ENCODE measurements at regions of chr1 and their contacts with region 1.

Region 1: DNA sequence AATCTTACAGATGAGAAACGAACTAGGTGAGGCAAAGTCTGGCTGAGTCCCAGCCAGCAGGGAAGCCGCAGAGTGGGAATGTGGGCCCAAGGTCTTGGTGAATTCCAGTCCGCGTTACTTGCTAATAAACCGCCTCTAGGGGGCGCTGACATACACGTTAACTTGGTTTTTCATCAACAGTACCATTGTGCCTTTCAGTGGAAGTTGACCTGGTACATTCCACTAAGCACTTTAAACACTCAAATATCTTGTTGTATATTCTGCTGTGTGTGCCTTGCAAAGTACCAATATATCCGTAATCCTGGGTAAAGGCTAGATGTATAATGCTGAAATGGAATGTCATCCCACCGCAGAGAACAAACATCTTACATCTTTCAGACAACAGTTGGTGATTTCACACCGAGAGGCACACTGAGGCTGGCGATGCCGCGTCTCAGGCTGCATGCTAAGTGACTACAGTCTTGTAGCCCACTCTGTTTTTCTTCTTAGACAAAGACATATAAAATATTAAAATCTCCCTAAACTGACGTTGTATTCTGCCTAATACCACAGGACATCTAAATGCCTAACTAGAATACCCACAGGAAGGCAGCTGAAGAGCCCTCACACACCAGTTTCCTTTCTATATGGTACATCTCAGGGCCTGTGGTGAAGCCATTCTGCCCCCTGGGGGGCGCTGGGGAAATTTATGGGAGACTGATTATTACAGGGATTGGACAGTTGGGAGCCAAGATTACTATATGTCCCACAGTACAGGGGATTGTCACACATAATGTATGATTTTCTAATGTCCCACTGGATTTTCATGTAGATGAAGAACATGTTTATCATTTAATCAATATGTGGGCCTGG is 49.2 kb upstream of the C1orf198 start:
- DNase-seq: peak; percentile 60 to 90
- ATAC-seq: peak; percentile 61 to 78 (median 76)
- H3K4me3 ChIP-seq: no peak overlapping the region
- H3K4me3 Mint-ChIP-seq: no peak overlapping the region
- H3K27ac ChIP-seq: no peak overlapping the region
- H3K27ac Mint-ChIP-seq: peak overlapping the region; percentile 41 to 69
- H3K4me1 ChIP-seq: no peaks in the 10 kb centered on the region
- H3K4me1 Mint-ChIP-seq: peaks cover 4 to 5% of the 10 kb centered on the region in 2 donors
- H3K27me3 ChIP-seq: no peaks in the 10 kb centered on the region
- H3K27me3 Mint-ChIP-seq: no peaks in the 10 kb centered on the region
- CTCF ChIP-seq: peak; percentile 78

Region 2: GRCh38 chr1:230971771-230972170 is 54.3 kb after region 1 on chr1:
- intact Hi-C with region 1: loop called (anchors 2 kb)
- DNase-seq: no peak
- ATAC-seq: no peak
- H3K4me3 ChIP-seq: no peak overlapping the region
- H3K4me3 Mint-ChIP-seq: peak overlapping the region; percentile 70
- H3K27ac ChIP-seq: peak overlapping the region; percentile 76
- H3K27ac Mint-ChIP-seq: peak overlapping the region; percentile 87 to 97
- H3K4me1 ChIP-seq: peaks cover 42% of the 10 kb centered on the region
- H3K4me1 Mint-ChIP-seq: peaks cover 68 to 70% of the 10 kb centered on the region in 2 donors
- H3K27me3 ChIP-seq: no peaks in the 10 kb centered on the region
- H3K27me3 Mint-ChIP-seq: no peaks in the 10 kb centered on the region
- CTCF ChIP-seq: no peak

Region 3: GRCh38 chr1:230978491-230979388 is 61.2 kb after region 1 on chr1 and contains the starts of genes ARV1 and TTC13:
- intact Hi-C with region 1: loop called (anchors 1 kb)
- DNase-seq: peak; percentile 92 to 96
- ATAC-seq: peak; percentile 94 to 99 (median 94)
- H3K4me3 ChIP-seq: peak within 1 kb of the TSS; percentile 57
- H3K4me3 Mint-ChIP-seq: peak within 1 kb of the TSS; percentile 99
- H3K27ac ChIP-seq: peak within 1 kb of the TSS; percentile 82
- H3K27ac Mint-ChIP-seq: peak within 1 kb of the TSS in 1 of 2 donors; percentile 97
- H3K4me1 ChIP-seq: peaks cover 40% of the 10 kb centered on the region
- H3K4me1 Mint-ChIP-seq: peaks cover 31 to 49% of the 10 kb centered on the region in 2 donors
- H3K27me3 ChIP-seq: no peaks in the 10 kb centered on the region
- H3K27me3 Mint-ChIP-seq: no peaks in the 10 kb centered on the region
- CTCF ChIP-seq: peak; percentile 35
- total RNA-seq, gene ARV1: 7.2 to 7.6 (median 7.3) TPM
- total RNA-seq, gene TTC13: 72.4 to 90.1 (median 80.4) TPM

Region 4: DNA sequence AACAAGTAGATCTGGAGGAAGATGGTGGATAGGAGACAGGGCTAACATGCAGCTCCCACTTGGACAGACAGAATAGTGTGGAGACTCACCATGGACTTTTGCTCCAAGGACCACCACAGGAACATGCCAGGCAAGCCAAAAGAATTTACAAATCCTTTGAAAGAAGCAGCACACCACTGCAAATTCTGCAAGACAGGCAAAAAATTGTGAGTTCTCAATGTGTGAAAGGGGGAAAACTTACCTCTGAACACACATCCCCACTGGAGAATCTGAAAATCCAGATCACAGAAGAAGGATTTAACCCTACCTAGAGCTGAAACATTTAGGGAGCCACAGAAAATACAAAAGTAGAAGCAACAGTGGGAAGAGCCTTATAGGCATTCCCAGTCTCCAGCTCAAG is 84.4 kb after region 1 on chr1:
- intact Hi-C with region 1: no loop called
- DNase-seq: no peak
- ATAC-seq: no peak
- H3K4me3 ChIP-seq: no peak overlapping the region
- H3K4me3 Mint-ChIP-seq: no peak overlapping the region
- H3K27ac ChIP-seq: no peak overlapping the region
- H3K27ac Mint-ChIP-seq: no peak overlapping the region
- H3K4me1 ChIP-seq: no peaks in the 10 kb centered on the region
- H3K4me1 Mint-ChIP-seq: no peaks in the 10 kb centered on the region
- H3K27me3 ChIP-seq: no peaks in the 10 kb centered on the region
- H3K27me3 Mint-ChIP-seq: no peaks in the 10 kb centered on the region
- CTCF ChIP-seq: no peak

Region 5: DNA sequence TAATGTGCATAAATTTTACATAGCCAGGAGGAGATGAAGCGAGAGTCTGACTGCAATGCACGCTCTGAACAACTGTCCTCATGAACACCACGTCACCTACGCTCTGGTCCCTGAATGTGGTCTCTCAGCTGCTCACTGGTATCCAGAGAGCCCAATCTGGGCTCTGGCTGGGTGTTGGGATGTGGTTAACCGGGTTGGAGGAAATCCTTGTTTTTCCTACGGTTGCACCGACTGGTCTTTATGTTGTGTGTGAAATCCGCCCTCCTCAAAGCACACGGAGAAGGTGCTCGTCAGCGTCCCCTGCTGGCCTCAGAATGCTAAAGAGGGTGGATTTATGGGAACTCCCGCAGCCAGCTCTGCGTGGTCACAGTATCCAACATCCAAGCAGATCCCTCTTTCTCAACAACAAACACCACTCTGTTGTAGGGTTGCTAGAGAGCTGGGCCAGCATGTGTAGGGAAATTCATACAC is 174.4 kb after region 1 on chr1:
- intact Hi-C with region 1: loop called (anchors 2 kb)
- DNase-seq: peak in 1 of 2 donors; percentile 65
- ATAC-seq: peak in 2 of 3 donors; percentile 37 to 47
- H3K4me3 ChIP-seq: no peak overlapping the region
- H3K4me3 Mint-ChIP-seq: no peak overlapping the region
- H3K27ac ChIP-seq: no peak overlapping the region
- H3K27ac Mint-ChIP-seq: no peak overlapping the region
- H3K4me1 ChIP-seq: no peaks in the 10 kb centered on the region
- H3K4me1 Mint-ChIP-seq: peaks cover 0 to 7% of the 10 kb centered on the region in 2 donors
- H3K27me3 ChIP-seq: no peaks in the 10 kb centered on the region
- H3K27me3 Mint-ChIP-seq: peaks cover 10 to 20% of the 10 kb centered on the region in 2 donors
- CTCF ChIP-seq: peak; percentile 36

Region 6: GRCh38 chr1:231211005-231211857 is 293.7 kb after region 1 on chr1:
- intact Hi-C with region 1: loop called (anchors 1 kb)
- DNase-seq: peak; percentile 76 to 93
- ATAC-seq: peak; percentile 92 to 95 (median 95)
- H3K4me3 ChIP-seq: peak overlapping the region; percentile 31
- H3K4me3 Mint-ChIP-seq: peak overlapping the region; percentile 87
- H3K27ac ChIP-seq: peak overlapping the region; percentile 28
- H3K27ac Mint-ChIP-seq: peak overlapping the region; percentile 58 to 91
- H3K4me1 ChIP-seq: peaks cover 15% of the 10 kb centered on the region
- H3K4me1 Mint-ChIP-seq: peaks cover 8 to 10% of the 10 kb centered on the region in 2 donors
- H3K27me3 ChIP-seq: no peaks in the 10 kb centered on the region
- H3K27me3 Mint-ChIP-seq: no peaks in the 10 kb centered on the region
- CTCF ChIP-seq: peak; percentile 91